ENCODE measurements at regions of chr1 and their contacts with region 1.

Region 1: DNA sequence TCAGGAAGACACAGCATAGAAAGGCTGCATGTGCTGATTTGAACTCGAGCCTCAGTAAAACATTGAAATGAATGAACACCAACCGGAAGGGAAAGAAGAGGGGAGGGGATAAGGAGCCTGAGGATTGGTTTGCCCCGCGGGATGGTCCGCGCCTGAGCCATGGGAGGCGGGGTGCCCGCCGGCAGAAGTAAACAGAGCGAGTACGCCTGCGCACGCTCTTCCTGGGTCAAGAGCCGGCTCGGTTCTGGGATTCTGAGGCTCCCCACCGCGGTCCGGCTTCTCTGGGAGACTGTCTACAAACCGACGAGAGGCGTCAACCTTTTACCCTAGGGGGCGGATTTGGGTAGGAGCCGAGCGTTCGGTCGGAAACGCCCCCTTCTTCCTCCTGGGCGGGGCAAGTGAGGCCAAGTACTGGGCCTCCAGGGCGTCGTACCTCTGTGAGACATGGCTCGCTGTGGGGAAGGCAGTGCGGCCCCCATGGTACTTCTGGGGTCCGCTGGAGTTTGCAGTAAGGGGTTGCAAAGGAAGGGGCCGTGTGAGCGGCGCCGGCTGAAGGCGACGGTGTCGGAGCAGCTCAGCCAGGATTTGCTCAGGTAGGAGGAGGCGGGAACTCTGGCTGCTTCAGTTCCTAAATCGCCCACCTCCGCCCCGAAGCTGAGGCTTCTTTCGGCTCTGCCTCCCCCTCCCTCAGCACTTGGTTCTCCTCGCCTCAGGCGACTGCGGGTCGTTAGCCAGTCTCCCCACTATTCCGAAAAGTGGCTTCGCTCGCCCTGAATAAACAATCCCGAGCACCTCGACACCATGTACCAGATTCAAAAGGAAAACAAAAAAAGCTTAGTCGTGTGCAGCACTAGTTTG is at the start of gene BTBD8:
- DNase-seq: peak; percentile 75
- ATAC-seq: peak; percentile 93
- H3K4me3 ChIP-seq: peak within 1 kb of the TSS; percentile 80
- H3K27ac ChIP-seq: no peak within 1 kb of the TSS; the same call in 1 of the 2 replicates
- H3K4me1 ChIP-seq: no peaks in the 10 kb centered on the region
- H3K27me3 ChIP-seq: no peaks in the 10 kb centered on the region
- CTCF ChIP-seq: no peak
- total RNA-seq, gene BTBD8: 2.1 and 3.9 TPM in 2 replicates

Region 2: DNA sequence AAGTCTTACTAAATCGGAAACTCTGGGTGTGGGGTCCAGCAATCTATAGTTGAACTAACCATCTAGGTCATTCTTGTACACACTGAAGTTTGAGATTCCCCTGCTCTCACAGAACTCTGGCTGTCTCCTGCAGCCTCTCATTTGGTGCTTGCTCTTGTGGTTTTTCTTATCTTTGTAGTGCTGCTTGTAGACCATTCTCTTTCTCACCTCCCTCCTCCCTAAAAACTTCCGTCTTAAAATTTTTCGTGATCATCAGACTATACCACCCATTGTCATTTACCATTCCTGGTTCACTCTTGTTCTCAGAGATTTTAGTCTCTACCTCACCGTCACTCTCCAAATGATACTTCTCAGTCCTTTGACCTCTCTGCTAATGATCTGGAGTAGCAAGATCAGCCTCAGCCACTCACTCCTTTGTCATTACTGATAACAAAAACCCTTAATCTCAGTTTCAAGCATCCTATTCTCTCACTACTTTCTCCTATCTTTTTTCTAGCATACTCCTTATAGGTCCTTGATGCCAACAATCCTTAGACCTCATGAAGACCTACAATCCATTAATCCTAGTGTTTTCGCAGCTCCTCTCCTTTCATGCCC is 63.5 kb before region 1 on chr1:
- CTCF ChIA-PET with region 1: no interaction called
- POLR2A ChIA-PET with region 1: no interaction called
- intact Hi-C with region 1: no loop called
- DNase-seq: no peak
- ATAC-seq: no peak
- H3K4me3 ChIP-seq: no peak overlapping the region
- H3K27ac ChIP-seq: no peak overlapping the region
- H3K4me1 ChIP-seq: no peaks in the 10 kb centered on the region
- H3K27me3 ChIP-seq: no peaks in the 10 kb centered on the region
- CTCF ChIP-seq: no peak

Region 3: DNA sequence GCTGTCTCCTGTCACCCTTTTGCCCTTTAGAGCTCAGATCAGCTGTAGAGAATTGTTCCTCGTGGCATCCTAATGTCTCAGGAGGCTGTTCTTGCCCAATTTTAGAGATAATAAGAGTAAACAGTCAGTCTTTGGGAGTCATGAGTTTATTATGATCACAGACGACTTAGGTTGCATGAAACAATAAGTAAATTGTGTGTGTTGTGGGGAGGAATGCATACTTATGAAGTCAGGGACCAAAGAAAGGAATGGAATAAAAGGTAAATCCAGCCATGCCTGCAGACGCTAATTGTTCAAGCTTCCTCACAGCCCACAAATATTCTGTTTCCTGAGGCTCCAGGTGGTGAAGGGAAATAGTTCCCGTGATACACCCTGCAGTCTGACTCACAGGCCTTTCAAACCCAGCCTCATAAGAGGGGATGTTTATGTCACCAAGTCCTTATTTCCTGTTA is 49.7 kb before region 1 on chr1:
- CTCF ChIA-PET with region 1: no interaction called
- POLR2A ChIA-PET with region 1: no interaction called
- intact Hi-C with region 1: loop called (anchors 5 kb)
- DNase-seq: peak; percentile 80
- ATAC-seq: peak; percentile 80
- H3K4me3 ChIP-seq: peak overlapping the region; percentile 99
- H3K27ac ChIP-seq: peak overlapping the region; percentile 36
- H3K4me1 ChIP-seq: peaks cover 23% of the 10 kb centered on the region
- H3K27me3 ChIP-seq: no peaks in the 10 kb centered on the region
- CTCF ChIP-seq: no peak